ENCODE measurements at regions of chr7 and their contacts with region 1.

Region 1: GRCh38 chr7:48109848-48110663 is 21.0 kb downstream of the UPP1 start:
- DNase-seq: peak; percentile 73 to 96
- H3K4me3 ChIP-seq: no peak overlapping the region
- H3K27ac ChIP-seq: no peak overlapping the region
- H3K4me1 ChIP-seq: no peaks in the 10 kb centered on the region
- H3K27me3 ChIP-seq: no peaks in the 10 kb centered on the region
- CTCF ChIP-seq: peak; percentile 94 to 98 (median 97)
- EP300 ChIP-seq: no peak
- POLR2A ChIP-seq: no peak
- RAD21 ChIP-seq: peak; percentile 92 to 95

Region 2: DNA sequence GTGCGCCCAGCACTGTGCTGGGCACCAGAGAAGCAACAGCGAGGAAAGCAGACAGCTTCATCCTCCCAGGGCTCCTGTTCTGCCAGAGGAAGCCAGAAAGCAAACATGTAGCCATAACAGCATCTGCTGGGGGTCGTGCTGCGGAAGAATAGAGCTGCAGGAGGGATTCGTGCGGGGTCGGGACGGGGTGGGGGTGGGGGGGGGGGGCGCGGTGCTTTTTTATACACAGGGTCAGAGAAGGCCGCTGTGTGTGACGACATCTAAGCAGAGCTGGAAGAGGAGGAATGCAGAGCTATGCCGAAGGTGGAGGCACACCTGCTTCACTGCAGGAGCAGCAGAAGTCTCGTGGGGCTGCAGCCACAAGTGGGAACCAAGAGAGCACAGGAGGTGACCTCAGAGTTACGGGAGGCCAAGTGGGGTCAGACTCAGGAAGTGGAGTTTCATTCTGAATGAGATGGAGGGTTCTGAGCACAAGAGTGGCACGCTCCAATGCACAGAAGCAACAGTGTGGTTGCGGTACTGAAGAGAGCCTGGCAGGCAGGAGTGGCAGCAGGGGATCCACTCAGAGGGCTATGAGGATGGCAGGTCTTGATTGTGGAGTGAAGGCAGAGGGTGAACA is 172.9 kb before region 1 on chr7:
- CTCF ChIA-PET with region 1: interaction called, 11 read pairs
- POLR2A ChIA-PET with region 1: interaction called, 3 read pairs
- DNase-seq: no peak
- H3K4me3 ChIP-seq: no peak overlapping the region
- H3K27ac ChIP-seq: no peak overlapping the region
- H3K4me1 ChIP-seq: peaks cover 0 to 9% (median 5%) of the 10 kb centered on the region in 4 experiments; a peak in 6 of 7 replicates
- H3K27me3 ChIP-seq: no peaks in the 10 kb centered on the region
- CTCF ChIP-seq: no peak
- EP300 ChIP-seq: no peak
- POLR2A ChIP-seq: no peak
- RAD21 ChIP-seq: no peak

Region 3: GRCh38 chr7:47945261-47946001 is 164.6 kb before region 1 on chr7:
- CTCF ChIA-PET with region 1: interaction called, 33 read pairs
- POLR2A ChIA-PET with region 1: interaction called, 3 read pairs
- DNase-seq: peak in 1 of 2 experiments; percentile 88
- H3K4me3 ChIP-seq: no peak overlapping the region
- H3K27ac ChIP-seq: no peak overlapping the region
- H3K4me1 ChIP-seq: peaks cover 0 to 9% (median 5%) of the 10 kb centered on the region in 4 experiments; a peak in 6 of 7 replicates
- H3K27me3 ChIP-seq: no peaks in the 10 kb centered on the region
- CTCF ChIP-seq: peak in 2 of 3 experiments; percentile 63 to 67; a peak in 3 of 4 replicates
- EP300 ChIP-seq: no peak
- POLR2A ChIP-seq: no peak
- RAD21 ChIP-seq: peak; percentile 75 to 79

Region 4: GRCh38 chr7:47968847-47969774 is 140.9 kb before region 1 on chr7:
- CTCF ChIA-PET with region 1: interaction called, 13 read pairs
- POLR2A ChIA-PET with region 1: no interaction called
- DNase-seq: peak; percentile 46 to 87
- H3K4me3 ChIP-seq: no peak overlapping the region
- H3K27ac ChIP-seq: no peak overlapping the region
- H3K4me1 ChIP-seq: no peaks in the 10 kb centered on the region
- H3K27me3 ChIP-seq: no peaks in the 10 kb centered on the region
- CTCF ChIP-seq: peak; percentile 76 to 95 (median 88)
- EP300 ChIP-seq: no peak
- POLR2A ChIP-seq: no peak
- RAD21 ChIP-seq: peak; percentile 83 to 84

Region 5: GRCh38 chr7:47991741-47992311 is 118.2 kb before region 1 on chr7:
- CTCF ChIA-PET with region 1: interaction called, 38 read pairs
- POLR2A ChIA-PET with region 1: interaction called, 3 read pairs
- DNase-seq: peak; percentile 69 to 87
- H3K4me3 ChIP-seq: peak overlapping the region in 3 of 4 experiments; percentile 29 to 54 (median 43); a peak in 5 of 8 replicates
- H3K27ac ChIP-seq: peak overlapping the region; percentile 42; the same call in 1 of the 2 replicates
- H3K4me1 ChIP-seq: peaks cover 0 to 5% (median 0%) of the 10 kb centered on the region in 4 experiments; a peak in 5 of 7 replicates
- H3K27me3 ChIP-seq: no peaks in the 10 kb centered on the region
- CTCF ChIP-seq: peak; percentile 70 to 73 (median 71)
- EP300 ChIP-seq: no peak; a peak in 1 of 3 replicates
- POLR2A ChIP-seq: peak in 1 of 2 experiments; percentile 47; a peak in 2 of 3 replicates
- RAD21 ChIP-seq: peak; percentile 77 to 83

Region 6: DNA sequence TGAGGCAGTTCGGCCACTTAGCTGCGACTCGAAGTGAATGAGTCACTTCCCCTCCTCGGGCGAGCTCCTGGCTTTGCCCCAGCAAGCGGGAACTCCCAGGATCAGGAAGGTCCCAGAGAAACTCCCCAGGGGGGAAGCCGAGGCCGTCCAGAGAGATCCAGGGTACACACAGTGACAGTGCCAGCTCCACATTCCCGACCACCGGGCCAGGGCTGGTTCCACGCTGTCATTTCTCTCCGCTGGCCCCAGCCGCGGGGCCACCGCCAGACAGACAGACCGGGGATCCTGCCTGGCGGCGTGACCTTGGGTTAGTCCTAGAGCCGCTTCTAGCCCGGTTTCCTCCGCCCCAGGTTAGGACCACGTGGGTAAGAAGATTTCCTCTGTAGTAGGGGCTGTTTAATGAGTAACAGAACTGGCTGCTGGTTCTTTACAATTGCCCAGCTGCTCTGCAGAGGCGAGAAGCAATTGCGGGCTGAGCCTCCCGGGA is 21.5 kb before region 1 on chr7:
- CTCF ChIA-PET with region 1: interaction called, 34 read pairs
- POLR2A ChIA-PET with region 1: interaction called, 26 read pairs
- DNase-seq: peak in 1 of 2 experiments; percentile 82
- H3K4me3 ChIP-seq: peak overlapping the region; percentile 57 to 85 (median 66)
- H3K27ac ChIP-seq: peak overlapping the region; percentile 66
- H3K4me1 ChIP-seq: peaks cover 5 to 11% (median 7%) of the 10 kb centered on the region in 4 experiments
- H3K27me3 ChIP-seq: no peaks in the 10 kb centered on the region
- CTCF ChIP-seq: no peak
- EP300 ChIP-seq: no peak
- POLR2A ChIP-seq: peak in 1 of 2 experiments; percentile 81; a peak in 2 of 3 replicates
- RAD21 ChIP-seq: no peak

Region 7: DNA sequence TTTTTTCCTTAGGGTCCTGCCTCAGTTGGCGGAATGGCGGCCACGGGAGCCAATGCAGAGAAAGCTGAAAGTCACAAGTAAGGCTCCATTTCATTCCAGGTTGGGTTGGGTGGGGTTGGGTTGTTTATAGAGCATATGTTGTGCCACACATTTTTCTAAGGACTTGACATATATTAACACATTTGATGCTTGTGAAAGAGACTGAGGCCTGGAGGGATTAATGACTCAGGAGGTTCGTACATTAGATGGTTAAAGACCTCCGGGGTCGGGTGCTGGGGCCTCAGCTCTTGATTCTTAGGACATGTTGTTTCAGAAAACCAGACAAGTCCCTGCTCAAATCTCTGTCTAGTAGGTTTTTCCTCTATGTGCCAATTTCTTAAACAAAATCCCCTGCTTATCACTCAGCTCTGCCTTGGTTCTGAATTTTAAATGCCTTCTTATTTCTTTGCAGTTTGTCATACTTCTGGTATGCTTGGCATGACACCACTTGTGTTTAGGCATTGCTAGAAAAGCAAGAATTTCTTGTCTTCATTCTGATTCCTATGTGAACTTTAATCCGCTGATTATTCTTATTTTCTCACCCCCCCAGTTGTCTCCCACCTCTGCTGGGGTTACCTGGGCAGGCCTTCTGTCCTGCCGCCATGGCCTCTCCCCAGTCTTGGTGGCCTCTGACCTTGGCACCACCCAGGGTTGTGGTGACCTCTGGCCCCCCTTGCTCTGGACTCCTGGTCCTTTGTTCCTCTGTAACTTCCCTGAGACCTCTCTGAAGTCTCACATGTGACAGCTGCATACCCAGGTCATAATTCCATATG is 15.1 kb before region 1 on chr7:
- CTCF ChIA-PET with region 1: interaction called, 34 read pairs
- POLR2A ChIA-PET with region 1: interaction called, 26 read pairs
- DNase-seq: no peak
- H3K4me3 ChIP-seq: no peak overlapping the region
- H3K27ac ChIP-seq: no peak overlapping the region
- H3K4me1 ChIP-seq: peaks cover 0 to 4% (median 0%) of the 10 kb centered on the region in 4 experiments; a peak in 4 of 7 replicates
- H3K27me3 ChIP-seq: no peaks in the 10 kb centered on the region
- CTCF ChIP-seq: no peak
- EP300 ChIP-seq: no peak
- POLR2A ChIP-seq: no peak
- RAD21 ChIP-seq: no peak

Region 8: GRCh38 chr7:48209004-48209600 is 99.0 kb after region 1 on chr7:
- CTCF ChIA-PET with region 1: no interaction called
- POLR2A ChIA-PET with region 1: no interaction called
- DNase-seq: no peak
- H3K4me3 ChIP-seq: no peak overlapping the region
- H3K27ac ChIP-seq: no peak overlapping the region
- H3K4me1 ChIP-seq: no peaks in the 10 kb centered on the region
- H3K27me3 ChIP-seq: no peaks in the 10 kb centered on the region
- CTCF ChIP-seq: no peak
- EP300 ChIP-seq: no peak
- POLR2A ChIP-seq: no peak
- RAD21 ChIP-seq: no peak

Measured in H1 (cell line).